Dendritic cell treated with granulocyte-macrophage colony-stimulating factor and Interleukin-4, amounts not matched to agents 40 ng/mL and 50 ng/mL, for 4 days (primary cell): ENCODE measurements at regions of chr1 and their contacts with region 1.

Region 1: DNA sequence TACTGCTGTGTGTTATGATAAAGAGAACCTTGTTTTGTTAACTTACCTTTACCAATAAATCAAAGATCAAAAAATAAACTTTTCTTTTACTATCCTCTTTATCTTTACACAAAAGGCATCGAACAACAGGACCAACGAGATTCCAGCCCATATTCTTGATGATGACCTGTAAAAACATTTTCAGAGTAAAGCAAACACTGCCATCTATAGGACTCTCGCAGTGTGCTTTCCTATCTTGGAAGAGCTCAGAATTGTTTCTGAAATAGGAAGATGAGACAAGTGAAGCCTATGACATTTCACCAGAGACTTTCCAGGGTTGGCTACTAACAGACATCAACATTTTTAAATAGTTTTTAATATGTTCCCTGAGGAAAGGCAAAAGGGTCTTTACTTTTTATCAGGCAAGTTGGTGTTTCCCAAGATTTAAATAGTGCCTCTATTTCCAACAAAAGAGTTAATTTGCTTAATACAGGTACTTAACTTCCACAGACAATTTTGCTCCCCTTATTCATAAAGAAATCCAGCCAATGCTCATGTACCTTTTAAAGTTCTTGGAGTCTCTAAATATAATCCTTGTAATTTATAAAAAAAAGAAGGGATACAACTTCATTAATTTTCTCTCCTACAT is 7.3 kb downstream of the GLMN start:
- H3K4me3 Mint-ChIP-seq: no peak overlapping the region
- H3K27ac Mint-ChIP-seq: no peak overlapping the region
- H3K4me1 Mint-ChIP-seq: peaks cover 14% of the 10 kb centered on the region
- H3K27me3 Mint-ChIP-seq: no peaks in the 10 kb centered on the region

Region 2: GRCh38 chr1:91282695-91283420 is 1008.6 kb before region 1 on chr1:
- intact Hi-C with region 1: loop called (anchors 10 kb)
- H3K4me3 Mint-ChIP-seq: no peak overlapping the region
- H3K27ac Mint-ChIP-seq: no peak overlapping the region
- H3K4me1 Mint-ChIP-seq: no peaks in the 10 kb centered on the region
- H3K27me3 Mint-ChIP-seq: no peaks in the 10 kb centered on the region

Region 3: GRCh38 chr1:91997607-91998195 is 293.8 kb before region 1 on chr1:
- intact Hi-C with region 1: loop called (anchors 1 kb)
- H3K4me3 Mint-ChIP-seq: no peak overlapping the region
- H3K27ac Mint-ChIP-seq: no peak overlapping the region
- H3K4me1 Mint-ChIP-seq: no peaks in the 10 kb centered on the region
- H3K27me3 Mint-ChIP-seq: no peaks in the 10 kb centered on the region

Region 4: GRCh38 chr1:92663775-92664174 is 372.3 kb after region 1 on chr1:
- intact Hi-C with region 1: no loop called
- H3K4me3 Mint-ChIP-seq: no peak overlapping the region
- H3K27ac Mint-ChIP-seq: no peak overlapping the region
- H3K4me1 Mint-ChIP-seq: peaks cover 5% of the 10 kb centered on the region
- H3K27me3 Mint-ChIP-seq: no peaks in the 10 kb centered on the region